CD4-positive, alpha-beta T cell (primary cell): ENCODE measurements at regions of chr11 and their contacts with region 1.

Region 1: DNA sequence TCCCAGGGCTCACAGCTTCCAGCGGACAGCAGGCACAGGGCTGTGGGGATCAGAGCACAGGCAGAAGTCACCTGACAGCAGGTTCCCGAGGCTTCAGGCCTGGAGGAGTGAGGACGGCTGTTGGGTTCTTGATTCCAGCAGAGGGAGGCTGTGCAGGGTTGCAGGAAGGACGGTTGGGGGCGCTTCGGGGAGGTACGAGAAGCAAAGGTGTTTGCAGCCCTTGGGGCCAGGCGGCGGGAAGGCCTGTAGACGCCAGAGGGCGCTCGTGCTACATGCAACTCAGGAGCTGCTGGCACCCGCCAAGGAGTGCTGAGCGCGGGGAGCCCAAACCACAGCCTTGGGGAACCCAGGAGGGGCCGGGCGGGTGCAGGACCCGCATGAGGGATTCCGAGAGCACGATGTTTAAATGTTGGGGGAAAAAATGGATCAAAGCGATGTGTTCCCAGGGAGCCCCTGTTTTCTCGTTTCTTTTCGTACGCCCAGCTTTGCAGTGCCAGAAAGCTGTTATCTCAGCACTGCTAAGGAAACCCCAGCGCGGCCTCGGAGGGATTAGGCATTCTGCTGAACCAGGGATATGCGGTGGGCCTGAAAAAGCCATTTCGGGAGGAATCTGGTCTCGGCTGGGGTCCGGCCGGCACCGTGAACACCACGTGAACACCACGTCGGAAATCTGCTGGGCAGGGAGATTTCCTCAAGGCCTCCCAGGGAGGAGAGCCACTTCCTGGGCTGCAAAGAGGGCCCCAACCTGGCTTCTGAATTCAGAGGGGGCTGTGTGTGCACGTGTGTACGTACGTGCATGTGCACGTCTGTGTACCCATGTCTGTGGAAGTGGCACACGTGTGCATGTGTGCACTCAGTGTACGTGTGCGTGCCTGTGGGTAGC is 88.1 kb downstream of the KCNQ1 start:
- DNase-seq: peak; percentile 86 to 97 (median 92)
- ATAC-seq: peak; percentile 89
- H3K4me3 ChIP-seq: peak overlapping the region; percentile 33
- H3K4me3 Mint-ChIP-seq: peak overlapping the region; percentile 77
- H3K27ac ChIP-seq: no peak overlapping the region
- H3K27ac Mint-ChIP-seq: no peak overlapping the region
- H3K4me1 ChIP-seq: peaks cover 31% of the 10 kb centered on the region
- H3K4me1 Mint-ChIP-seq: peaks cover 25% of the 10 kb centered on the region
- H3K27me3 ChIP-seq: no peaks in the 10 kb centered on the region
- H3K27me3 Mint-ChIP-seq: no peaks in the 10 kb centered on the region
- CTCF ChIP-seq: peak; percentile 99

Region 2: GRCh38 chr11:2196970-2197770 is 335.8 kb before region 1 on chr11:
- CTCF ChIA-PET with region 1: no interaction called
- POLR2A ChIA-PET with region 1: no interaction called
- intact Hi-C with region 1: loop called (anchors 5 to 10 kb)
- DNase-seq: peak; percentile 53 to 84 (median 62)
- ATAC-seq: peak; percentile 90
- H3K4me3 ChIP-seq: no peak overlapping the region
- H3K4me3 Mint-ChIP-seq: no peak overlapping the region
- H3K27ac ChIP-seq: no peak overlapping the region
- H3K27ac Mint-ChIP-seq: no peak overlapping the region
- H3K4me1 ChIP-seq: peaks cover 14% of the 10 kb centered on the region
- H3K4me1 Mint-ChIP-seq: peaks cover 13% of the 10 kb centered on the region
- H3K27me3 ChIP-seq: no peaks in the 10 kb centered on the region
- H3K27me3 Mint-ChIP-seq: no peaks in the 10 kb centered on the region
- CTCF ChIP-seq: peak; percentile 63

Region 3: DNA sequence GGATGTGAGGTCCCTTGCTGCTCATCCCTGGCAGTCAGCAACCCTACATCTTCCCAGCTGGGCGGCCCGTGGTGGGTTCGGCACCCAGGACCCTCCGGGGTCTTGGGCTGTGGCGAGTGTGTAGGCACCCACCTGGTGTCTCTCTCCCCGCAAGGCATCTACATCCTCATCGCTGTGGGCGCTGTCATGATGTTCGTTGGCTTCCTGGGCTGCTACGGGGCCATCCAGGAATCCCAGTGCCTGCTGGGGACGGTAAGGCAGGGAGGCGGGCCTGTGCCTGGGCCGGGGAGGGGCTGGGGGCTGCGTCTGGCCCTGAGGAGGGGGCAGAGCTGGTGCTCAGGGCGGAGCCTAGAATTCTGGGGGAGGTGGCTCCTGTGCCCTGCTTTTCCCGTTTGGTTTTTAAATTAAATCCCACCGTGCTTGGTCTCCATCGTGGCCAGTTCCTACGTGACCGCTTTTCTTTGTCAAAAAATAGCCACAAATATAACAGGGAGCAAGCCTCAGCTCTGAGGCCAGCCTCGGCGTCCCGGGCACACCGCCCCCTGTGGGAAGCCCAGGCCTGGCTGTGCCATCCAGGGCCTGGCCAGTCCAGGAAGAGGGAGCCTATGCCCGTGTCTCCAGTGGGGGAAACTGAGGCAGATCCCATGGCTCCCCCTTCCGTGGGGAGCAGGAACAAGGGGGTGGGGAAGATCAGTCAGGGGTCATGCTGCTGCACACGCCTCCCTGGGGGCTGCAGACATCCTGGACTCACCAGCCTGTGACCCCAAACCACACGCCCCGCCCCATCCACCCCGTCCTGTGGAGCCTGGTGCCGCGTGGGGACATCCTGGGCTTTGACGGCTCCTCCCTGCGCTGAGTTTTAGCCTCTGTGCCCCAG is 138.8 kb before region 1 on chr11:
- CTCF ChIA-PET with region 1: no interaction called
- POLR2A ChIA-PET with region 1: no interaction called
- intact Hi-C with region 1: no loop called
- DNase-seq: peak in 1 of 14 experiments; percentile 44
- ATAC-seq: no peak
- H3K4me3 ChIP-seq: no peak overlapping the region
- H3K4me3 Mint-ChIP-seq: no peak overlapping the region
- H3K27ac ChIP-seq: no peak overlapping the region
- H3K27ac Mint-ChIP-seq: no peak overlapping the region
- H3K4me1 ChIP-seq: peaks cover 33% of the 10 kb centered on the region
- H3K4me1 Mint-ChIP-seq: peaks cover 10% of the 10 kb centered on the region
- H3K27me3 ChIP-seq: no peaks in the 10 kb centered on the region
- H3K27me3 Mint-ChIP-seq: no peaks in the 10 kb centered on the region
- CTCF ChIP-seq: no peak

Region 4: GRCh38 chr11:2428322-2428795 is 104.6 kb before region 1 on chr11:
- CTCF ChIA-PET with region 1: interaction called, 46 read pairs
- POLR2A ChIA-PET with region 1: no interaction called
- intact Hi-C with region 1: loop called (anchors 1 kb)
- DNase-seq: peak; percentile 80 to 94 (median 88)
- ATAC-seq: peak; percentile 97
- H3K4me3 ChIP-seq: no peak overlapping the region
- H3K4me3 Mint-ChIP-seq: no peak overlapping the region
- H3K27ac ChIP-seq: no peak overlapping the region
- H3K27ac Mint-ChIP-seq: no peak overlapping the region
- H3K4me1 ChIP-seq: peaks cover 3% of the 10 kb centered on the region
- H3K4me1 Mint-ChIP-seq: no peaks in the 10 kb centered on the region
- H3K27me3 ChIP-seq: no peaks in the 10 kb centered on the region
- H3K27me3 Mint-ChIP-seq: no peaks in the 10 kb centered on the region
- CTCF ChIP-seq: peak; percentile 86

Region 5: DNA sequence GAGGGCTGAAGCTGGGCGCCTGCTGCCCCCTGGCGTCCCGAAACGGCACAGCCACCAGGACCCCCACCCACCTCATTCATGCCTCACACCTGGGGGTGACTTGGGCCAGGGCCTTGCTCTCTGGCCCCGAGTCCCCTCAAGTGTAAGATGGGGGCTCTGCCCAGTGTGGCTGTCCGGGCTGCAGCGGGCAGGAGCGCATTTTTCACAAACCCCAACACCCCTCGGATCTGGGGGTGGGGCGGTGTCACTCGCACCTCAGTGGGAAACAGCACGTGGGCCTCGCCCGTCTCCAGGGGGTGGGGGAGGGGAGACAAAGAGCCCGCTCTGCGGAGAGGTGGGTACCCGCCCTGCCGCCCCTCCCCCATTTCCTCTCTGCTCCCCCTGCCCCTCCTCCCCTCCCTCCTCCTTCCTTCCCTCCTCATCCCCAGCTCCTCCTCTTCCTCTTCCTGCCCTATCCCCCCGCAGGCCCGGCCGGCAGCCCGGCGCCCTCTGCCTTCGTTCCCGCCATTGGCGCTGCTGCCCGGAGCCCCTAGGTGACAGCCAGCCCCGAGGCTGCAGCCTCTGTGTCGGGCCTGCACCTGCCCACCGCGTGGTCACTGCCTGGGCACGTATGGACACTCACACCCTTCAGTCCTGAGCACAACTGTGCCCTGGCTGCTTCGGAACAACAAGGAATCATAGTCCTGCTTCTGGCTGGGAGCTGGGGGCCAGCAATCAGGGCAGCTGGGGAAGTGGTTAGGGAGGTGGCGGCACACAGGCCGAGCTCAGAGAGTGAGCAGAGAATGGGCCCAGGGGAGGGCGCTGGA is 359.5 kb after region 1 on chr11:
- CTCF ChIA-PET with region 1: interaction called, 158 read pairs
- POLR2A ChIA-PET with region 1: interaction called, 25 read pairs
- intact Hi-C with region 1: loop called (anchors 1 kb)
- DNase-seq: peak; percentile 42 to 84 (median 64)
- ATAC-seq: peak; percentile 69
- H3K4me3 ChIP-seq: peak overlapping the region; percentile 49
- H3K4me3 Mint-ChIP-seq: peak overlapping the region; percentile 82
- H3K27ac ChIP-seq: peak overlapping the region; percentile 53 to 68
- H3K27ac Mint-ChIP-seq: peak overlapping the region; percentile 68
- H3K4me1 ChIP-seq: peaks cover 47% of the 10 kb centered on the region
- H3K4me1 Mint-ChIP-seq: peaks cover 29% of the 10 kb centered on the region
- H3K27me3 ChIP-seq: no peaks in the 10 kb centered on the region
- H3K27me3 Mint-ChIP-seq: no peaks in the 10 kb centered on the region
- CTCF ChIP-seq: peak; percentile 86

Region 6: GRCh38 chr11:3021125-3021524 is 488.2 kb after region 1 on chr11:
- CTCF ChIA-PET with region 1: interaction called, 10 read pairs
- POLR2A ChIA-PET with region 1: no interaction called
- intact Hi-C with region 1: no loop called
- DNase-seq: peak in 12 of 14 experiments; percentile 28 to 74 (median 38)
- ATAC-seq: peak; percentile 60
- H3K4me3 ChIP-seq: no peak overlapping the region
- H3K4me3 Mint-ChIP-seq: no peak overlapping the region
- H3K27ac ChIP-seq: no peak overlapping the region
- H3K27ac Mint-ChIP-seq: no peak overlapping the region
- H3K4me1 ChIP-seq: peaks cover 54% of the 10 kb centered on the region
- H3K4me1 Mint-ChIP-seq: peaks cover 35% of the 10 kb centered on the region
- H3K27me3 ChIP-seq: no peaks in the 10 kb centered on the region
- H3K27me3 Mint-ChIP-seq: no peaks in the 10 kb centered on the region
- CTCF ChIP-seq: peak; percentile 42

Region 7: GRCh38 chr11:3412837-3413236 is 879.9 kb after region 1 on chr11:
- CTCF ChIA-PET with region 1: interaction called, 5 read pairs
- POLR2A ChIA-PET with region 1: no interaction called
- intact Hi-C with region 1: loop called (anchors 2 kb)
- DNase-seq: no peak
- ATAC-seq: no peak
- H3K4me3 ChIP-seq: no peak overlapping the region
- H3K4me3 Mint-ChIP-seq: no peak overlapping the region
- H3K27ac ChIP-seq: no peak overlapping the region
- H3K27ac Mint-ChIP-seq: no peak overlapping the region
- H3K4me1 ChIP-seq: no peaks in the 10 kb centered on the region
- H3K4me1 Mint-ChIP-seq: peaks cover 9% of the 10 kb centered on the region
- H3K27me3 ChIP-seq: no peaks in the 10 kb centered on the region
- H3K27me3 Mint-ChIP-seq: no peaks in the 10 kb centered on the region
- CTCF ChIP-seq: no peak